SK-N-SH (cell line): ENCODE measurements at regions of chr21 and their contacts with region 1.

Region 1: GRCh38 chr21:39349211-39350093 is 564 bp upstream of the HMGN1 start:
- DNase-seq: peak; percentile 98
- H3K4me3 ChIP-seq: peak overlapping the region; percentile 49 to 69
- H3K27ac ChIP-seq: peak overlapping the region; percentile 79 to 98
- H3K4me1 ChIP-seq: peaks cover 14 to 23% of the 10 kb centered on the region in 2 experiments; a peak in 3 of 4 replicates
- H3K27me3 ChIP-seq: no peaks in the 10 kb centered on the region
- CTCF ChIP-seq: no peak
- EP300 ChIP-seq: no peak
- RAD21 ChIP-seq: no peak

Region 2: GRCh38 chr21:38095220-38095619 is 1254.2 kb before region 1 on chr21:
- CTCF ChIA-PET with region 1: no interaction called
- POLR2A ChIA-PET with region 1: no interaction called
- DNase-seq: no peak
- H3K4me3 ChIP-seq: no peak overlapping the region
- H3K27ac ChIP-seq: no peak overlapping the region
- H3K4me1 ChIP-seq: no peaks in the 10 kb centered on the region
- H3K27me3 ChIP-seq: no peaks in the 10 kb centered on the region
- CTCF ChIP-seq: no peak
- EP300 ChIP-seq: no peak
- RAD21 ChIP-seq: no peak

Region 3: DNA sequence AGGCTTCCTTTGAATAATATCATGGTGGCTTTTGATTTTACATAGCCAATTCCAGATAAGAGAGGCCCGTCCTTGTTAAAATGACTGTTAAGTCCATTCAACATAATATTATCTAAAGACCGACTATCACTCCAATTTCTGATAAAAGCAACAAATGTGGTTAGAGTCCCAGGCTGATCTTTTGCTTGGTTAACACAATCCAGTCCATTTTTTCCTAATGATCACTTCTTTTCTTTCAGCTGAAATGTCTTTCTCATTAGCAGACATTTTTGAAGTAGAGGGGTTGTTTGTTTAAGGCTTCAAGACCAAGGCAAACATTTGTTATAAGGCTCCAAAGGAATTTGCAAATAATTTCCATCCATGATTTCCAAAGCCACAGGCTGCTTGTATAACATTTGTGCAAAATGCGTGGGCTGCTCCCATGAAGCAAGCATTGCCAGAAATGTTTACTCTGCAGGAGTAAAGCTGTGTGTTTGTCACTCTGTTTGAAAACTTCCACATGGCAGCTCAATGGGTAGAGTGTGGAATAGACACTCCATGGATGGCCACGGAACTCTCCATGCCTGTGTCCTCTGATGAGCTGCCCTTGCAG is 277.7 kb before region 1 on chr21:
- CTCF ChIA-PET with region 1: no interaction called
- POLR2A ChIA-PET with region 1: no interaction called
- DNase-seq: no peak
- H3K4me3 ChIP-seq: no peak overlapping the region
- H3K27ac ChIP-seq: no peak overlapping the region
- H3K4me1 ChIP-seq: peaks cover 0 to 10% of the 10 kb centered on the region in 2 experiments; a peak in 1 of 4 replicates
- H3K27me3 ChIP-seq: no peaks in the 10 kb centered on the region
- CTCF ChIP-seq: no peak
- EP300 ChIP-seq: no peak
- RAD21 ChIP-seq: no peak

Region 4: GRCh38 chr21:39183237-39184007 is 166.0 kb before region 1 on chr21 and contains the start of gene PSMG1:
- CTCF ChIA-PET with region 1: no interaction called
- POLR2A ChIA-PET with region 1: interaction called, 10 read pairs
- DNase-seq: peak; percentile 94
- H3K4me3 ChIP-seq: peak within 1 kb of the TSS; percentile 75 to 93
- H3K27ac ChIP-seq: peak within 1 kb of the TSS; percentile 76 to 87
- H3K4me1 ChIP-seq: peaks cover 0 to 11% of the 10 kb centered on the region in 2 experiments; a peak in 3 of 4 replicates
- H3K27me3 ChIP-seq: no peaks in the 10 kb centered on the region
- CTCF ChIP-seq: no peak
- EP300 ChIP-seq: no peak
- RAD21 ChIP-seq: no peak
- polyA plus RNA-seq, gene PSMG1: 39.2 and 39.6 TPM in 2 replicates

Region 5: DNA sequence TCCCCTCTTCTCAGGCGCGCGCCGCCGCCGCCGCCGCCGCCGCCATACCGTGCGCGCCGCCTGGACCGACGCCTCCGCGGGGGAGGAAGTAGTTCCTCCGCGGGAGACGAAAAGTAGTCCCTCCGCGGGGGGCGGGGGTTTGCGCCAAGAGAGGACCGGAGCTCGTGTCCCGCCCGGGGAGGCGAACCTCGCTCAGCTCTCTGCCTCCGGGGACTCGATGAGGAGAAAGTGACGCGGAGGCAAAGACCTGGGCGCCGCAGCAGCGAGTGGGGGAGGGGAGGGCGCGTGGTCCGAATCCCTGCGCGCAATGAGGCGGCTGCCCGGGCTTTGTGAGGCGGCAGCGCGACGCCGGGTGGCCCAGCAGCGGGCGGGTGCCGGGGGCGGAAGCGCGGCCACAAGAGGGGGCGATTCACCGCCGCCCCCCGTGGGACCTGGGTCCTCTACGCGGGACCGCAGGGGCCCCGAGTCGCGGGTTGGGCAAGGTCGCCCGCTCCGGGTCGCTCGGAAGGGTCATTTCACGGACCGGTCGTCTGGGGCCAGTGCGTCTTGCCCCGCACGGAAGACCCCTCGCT is 35.8 kb before region 1 on chr21 and contains the start of gene BRWD1:
- CTCF ChIA-PET with region 1: interaction called, 24 read pairs
- POLR2A ChIA-PET with region 1: interaction called, 24 read pairs
- DNase-seq: peak; percentile 91
- H3K4me3 ChIP-seq: peak within 1 kb of the TSS; percentile 71 to 91
- H3K27ac ChIP-seq: peak within 1 kb of the TSS; percentile 90 to 97
- H3K4me1 ChIP-seq: peaks cover 5 to 14% of the 10 kb centered on the region in 2 experiments; a peak in 3 of 4 replicates
- H3K27me3 ChIP-seq: no peaks in the 10 kb centered on the region
- CTCF ChIP-seq: peak; percentile 46
- EP300 ChIP-seq: peak in 1 of 2 experiments; percentile 62; a peak in 1 of 4 replicates
- RAD21 ChIP-seq: peak; percentile 22; the same call in 1 of the 2 replicates
- polyA plus RNA-seq, gene BRWD1: 7.9 and 9.1 TPM in 2 replicates

Region 6: DNA sequence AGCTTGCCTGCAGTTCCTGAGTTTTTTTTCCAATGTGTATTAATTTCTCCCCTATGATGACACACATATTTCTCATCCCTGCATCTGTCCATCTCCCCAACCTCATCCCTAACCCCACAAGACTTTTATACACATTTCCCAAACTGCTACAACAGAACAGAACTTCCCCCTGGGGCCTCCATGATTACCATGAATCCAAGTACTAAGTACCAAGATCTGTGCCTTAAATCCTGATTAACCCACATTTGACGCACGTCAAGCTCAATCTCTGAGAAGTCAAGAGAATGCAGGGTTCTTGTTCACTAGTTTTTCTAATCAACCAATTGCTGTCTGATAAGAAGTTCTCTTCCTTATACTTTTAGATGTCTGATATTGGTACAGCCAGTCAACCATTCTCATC is 10.2 kb before region 1 on chr21:
- CTCF ChIA-PET with region 1: no interaction called
- POLR2A ChIA-PET with region 1: interaction called, 10 read pairs
- DNase-seq: no peak
- H3K4me3 ChIP-seq: no peak overlapping the region
- H3K27ac ChIP-seq: no peak overlapping the region
- H3K4me1 ChIP-seq: no peaks in the 10 kb centered on the region
- H3K27me3 ChIP-seq: no peaks in the 10 kb centered on the region
- CTCF ChIP-seq: no peak
- EP300 ChIP-seq: no peak
- RAD21 ChIP-seq: no peak

Region 7: DNA sequence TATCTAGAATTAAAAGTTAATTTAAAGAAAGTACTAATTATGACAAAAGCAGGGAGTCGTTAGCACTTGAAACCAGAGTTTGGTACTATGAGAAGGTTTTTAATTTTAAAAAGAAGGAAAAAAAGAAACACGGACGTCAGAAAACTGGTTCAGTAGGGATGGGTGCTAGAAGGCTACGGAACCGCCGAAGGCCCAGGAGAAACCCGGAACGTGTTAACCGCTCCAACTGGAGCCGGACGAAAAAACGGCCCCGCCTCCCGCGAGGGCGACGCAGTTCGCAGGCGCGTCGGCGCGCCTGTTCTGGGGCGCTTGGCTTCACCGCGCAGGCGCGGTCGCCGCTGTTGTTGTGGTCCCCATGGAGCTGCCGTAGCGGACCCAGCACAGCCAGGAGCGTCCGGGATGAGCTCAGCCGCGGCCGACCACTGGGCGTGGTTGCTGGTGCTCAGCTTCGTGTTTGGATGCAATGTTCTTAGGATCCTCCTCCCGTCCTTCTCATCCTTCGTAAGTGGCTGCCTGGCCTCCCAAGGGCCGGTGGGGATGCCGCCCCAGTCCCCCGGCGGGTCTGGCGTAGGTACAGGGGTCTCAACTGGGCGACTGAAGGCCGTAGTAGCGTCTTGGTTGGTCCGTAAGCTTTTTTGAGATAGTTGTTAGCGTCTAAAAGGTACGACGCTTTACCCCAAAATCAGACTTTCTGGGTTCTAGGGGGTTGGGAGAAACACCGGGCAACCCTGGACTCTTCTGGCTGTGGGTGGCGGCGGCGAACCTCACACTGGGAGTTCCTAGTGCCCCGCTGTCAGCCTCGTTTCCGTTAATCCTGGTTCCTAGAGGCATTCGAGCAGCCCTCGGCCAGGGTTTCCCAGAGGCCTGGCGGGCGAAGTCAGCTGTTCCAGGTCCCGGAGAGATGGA is 30.8 kb after region 1 on chr21:
- CTCF ChIA-PET with region 1: interaction called, 3 read pairs
- POLR2A ChIA-PET with region 1: interaction called, 19 read pairs
- DNase-seq: peak; percentile 95
- H3K4me3 ChIP-seq: peak overlapping the region; percentile 79 to 97
- H3K27ac ChIP-seq: peak overlapping the region; percentile 78 to 96
- H3K4me1 ChIP-seq: peaks cover 0 to 8% of the 10 kb centered on the region in 2 experiments; a peak in 3 of 4 replicates
- H3K27me3 ChIP-seq: no peaks in the 10 kb centered on the region
- CTCF ChIP-seq: no peak
- EP300 ChIP-seq: no peak
- RAD21 ChIP-seq: no peak

Region 8: GRCh38 chr21:39388038-39388810 is 38.8 kb after region 1 on chr21:
- CTCF ChIA-PET with region 1: interaction called, 6 read pairs
- POLR2A ChIA-PET with region 1: interaction called, 19 read pairs
- DNase-seq: peak; percentile 92
- H3K4me3 ChIP-seq: peak overlapping the region; percentile 44 to 76
- H3K27ac ChIP-seq: peak overlapping the region; percentile 19 to 67; a peak in 3 of 4 replicates
- H3K4me1 ChIP-seq: peaks cover 4 to 17% of the 10 kb centered on the region in 2 experiments; a peak in 3 of 4 replicates
- H3K27me3 ChIP-seq: no peaks in the 10 kb centered on the region
- CTCF ChIP-seq: peak; percentile 85
- EP300 ChIP-seq: no peak
- RAD21 ChIP-seq: peak; percentile 83